Right ventricle myocardium inferior (tissue), 1 donor: ENCODE measurements at regions of chr12 and their contacts with region 1.

Region 1: DNA sequence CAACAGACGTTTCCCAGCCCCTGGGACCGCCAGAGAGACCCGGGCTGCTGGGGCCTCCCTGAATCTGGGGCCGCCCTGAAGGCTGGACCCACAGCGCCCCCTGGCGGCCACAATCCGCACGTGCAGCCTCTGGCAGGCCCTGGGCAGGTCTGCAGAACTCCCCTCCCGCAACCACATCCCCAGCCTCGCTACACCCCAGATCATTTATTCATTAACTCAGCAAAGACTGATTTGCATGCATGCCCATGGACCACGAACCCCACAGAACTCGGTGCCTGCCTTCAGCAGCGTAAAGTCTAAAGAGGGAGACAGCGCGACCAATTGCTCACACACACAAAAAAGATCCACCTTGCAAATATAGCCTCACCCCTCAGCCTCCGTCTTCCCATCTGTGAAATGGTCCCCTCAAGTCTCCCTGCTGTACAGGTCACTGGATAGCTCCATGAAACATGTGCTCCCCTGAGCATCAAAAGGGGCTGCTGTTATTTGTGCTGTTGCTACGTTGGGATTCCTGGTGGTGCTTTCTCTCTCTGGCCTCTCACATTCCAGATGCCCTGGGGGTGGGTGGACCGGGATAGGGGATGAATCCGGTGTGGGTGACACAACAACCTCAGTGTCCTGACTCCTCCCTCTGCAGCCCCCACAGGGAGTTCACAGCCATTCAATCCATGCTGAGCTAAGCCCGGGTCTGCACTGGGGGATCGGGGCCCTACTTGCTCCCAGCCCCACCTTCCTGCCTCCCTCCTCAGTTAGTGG is 96.4 kb downstream of the SCARB1 start:
- DNase-seq: peak; percentile 93
- ATAC-seq: peak; percentile 67

Region 2: DNA sequence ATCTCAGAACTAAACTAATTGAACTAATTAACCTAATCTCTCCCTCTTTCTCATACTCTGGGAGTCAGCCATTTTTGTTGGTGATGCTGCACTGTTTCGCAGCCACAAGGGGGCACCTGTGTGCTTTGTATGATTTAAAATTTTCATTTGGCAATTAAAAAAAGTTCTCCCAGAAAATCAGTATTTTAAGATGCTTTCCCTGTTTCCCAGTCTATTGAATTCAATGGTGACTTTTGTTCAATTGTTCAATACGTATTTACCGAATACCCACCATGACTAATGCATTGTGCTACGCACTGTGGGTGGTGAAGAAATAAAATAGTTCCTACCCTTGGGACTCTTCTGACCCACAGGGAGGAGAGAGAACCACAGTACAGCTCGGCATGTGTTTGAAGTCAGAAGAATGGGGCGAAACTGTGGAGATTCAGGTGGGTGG is 730.6 kb before region 1 on chr12:
- intact Hi-C with region 1: loop called (anchors 1 kb)
- DNase-seq: no peak
- ATAC-seq: no peak

Region 3: DNA sequence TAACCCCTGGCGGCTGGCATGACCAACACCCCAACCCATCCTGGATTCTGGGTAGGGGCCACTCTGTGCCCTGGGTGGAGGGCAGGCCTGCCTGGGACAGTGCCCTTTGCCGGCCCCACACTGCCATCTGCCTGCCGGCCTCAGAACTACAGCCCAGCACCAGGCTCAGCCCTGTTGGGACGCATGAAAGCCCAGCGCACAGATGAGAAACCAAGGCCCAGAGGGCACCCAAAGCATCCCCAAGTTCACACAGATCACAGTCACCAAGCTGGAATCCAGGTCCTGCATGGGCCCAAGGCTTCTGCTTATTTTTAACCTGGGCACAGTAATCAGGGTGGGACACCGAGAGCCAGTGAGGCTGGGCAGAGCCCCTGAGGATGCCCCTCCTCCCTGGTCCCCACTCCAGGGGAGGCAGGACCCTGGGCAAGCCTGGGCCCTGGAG is 446.2 kb before region 1 on chr12:
- intact Hi-C with region 1: loop called (anchors 1 kb)
- DNase-seq: no peak
- ATAC-seq: peak; percentile 73

Region 4: DNA sequence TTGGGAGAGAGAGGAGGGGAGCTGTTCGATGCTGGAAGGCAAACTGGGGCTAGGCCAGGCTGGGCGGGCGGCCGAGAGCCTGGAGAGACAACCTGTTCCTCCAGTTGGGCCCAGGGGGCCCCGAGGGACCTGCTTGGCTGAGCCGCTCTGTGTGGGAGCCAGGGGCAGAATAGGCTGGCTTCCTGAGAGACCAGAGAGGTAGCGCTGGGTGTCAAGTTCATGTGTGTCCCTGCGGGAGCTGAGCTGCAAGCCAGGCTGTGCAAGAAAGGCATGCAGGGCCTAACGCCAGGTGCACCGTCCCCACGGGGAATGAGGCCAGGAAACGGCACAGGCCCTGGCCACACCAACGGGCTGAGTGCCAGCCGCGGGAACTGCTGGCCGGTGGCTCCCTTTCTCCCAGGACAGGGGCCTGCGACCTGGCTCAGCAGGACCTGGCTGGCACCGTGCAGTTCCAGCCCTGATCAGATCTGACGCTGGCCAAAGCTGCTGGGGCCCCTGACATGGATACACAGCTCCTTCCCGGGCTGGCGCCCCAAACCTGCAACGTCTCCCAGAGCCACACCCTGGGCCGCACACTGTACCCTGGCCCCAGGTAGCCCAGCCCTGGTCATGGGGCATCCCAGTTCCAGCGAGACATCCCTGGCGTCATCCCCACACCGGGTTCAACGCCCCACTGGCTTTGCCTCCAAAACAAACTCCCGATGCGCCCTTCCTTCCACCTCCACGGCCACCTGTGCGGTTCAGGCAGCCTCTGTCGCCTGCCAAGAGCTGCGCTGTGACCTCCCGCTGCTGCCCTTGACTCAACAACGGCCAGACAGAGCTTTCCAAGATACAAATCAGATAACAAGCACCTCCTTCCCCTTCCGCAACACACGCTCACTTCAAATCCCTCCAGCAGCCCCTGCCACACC is 407.3 kb before region 1 on chr12:
- intact Hi-C with region 1: loop called (anchors 5 kb)
- DNase-seq: peak; percentile 95
- ATAC-seq: peak; percentile 93

Region 5: DNA sequence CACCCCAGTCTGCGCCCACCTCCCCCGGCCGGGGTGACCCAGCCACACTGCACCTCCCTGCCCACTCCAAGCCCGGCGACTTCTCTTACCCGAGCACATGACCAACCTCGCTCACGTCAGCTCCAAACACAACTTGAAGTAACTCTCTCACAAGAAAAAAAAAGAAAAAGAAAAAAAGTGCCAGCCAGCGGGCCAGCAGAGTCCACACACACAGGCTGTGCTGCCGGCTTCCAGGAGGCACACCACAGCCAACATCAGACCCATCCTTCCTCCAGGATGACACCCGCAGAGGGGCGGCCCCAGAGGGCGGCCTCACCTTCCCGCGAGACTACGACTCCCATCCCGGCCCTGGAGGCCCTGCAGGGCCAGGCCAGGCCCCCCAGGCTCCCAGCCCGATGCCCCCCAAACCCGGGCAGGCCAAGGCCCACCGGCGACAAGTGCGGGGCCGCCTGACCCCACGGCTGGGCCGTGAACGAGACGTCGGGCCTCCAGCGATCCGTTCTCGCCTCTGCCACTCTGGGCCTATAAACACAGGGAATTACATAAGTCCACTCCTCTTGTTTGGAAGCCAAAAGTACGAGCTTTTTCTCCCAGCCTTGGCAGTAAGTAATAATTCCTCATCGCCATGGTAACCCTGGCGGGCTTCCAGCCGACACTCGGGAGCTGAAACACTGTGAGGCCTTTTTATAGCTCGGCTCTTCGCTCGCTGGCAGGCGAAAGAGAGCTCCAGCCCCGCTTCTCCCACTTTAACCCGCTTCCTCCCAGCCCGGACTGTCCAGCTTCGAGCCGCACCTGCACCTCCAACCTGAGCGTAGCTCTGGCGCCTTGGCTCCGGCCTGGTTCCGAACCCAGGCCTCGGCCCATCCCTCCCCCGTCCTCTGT is 249.0 kb before region 1 on chr12:
- intact Hi-C with region 1: loop called (anchors 5 kb)
- DNase-seq: peak; percentile 97
- ATAC-seq: peak; percentile 76

Region 6: DNA sequence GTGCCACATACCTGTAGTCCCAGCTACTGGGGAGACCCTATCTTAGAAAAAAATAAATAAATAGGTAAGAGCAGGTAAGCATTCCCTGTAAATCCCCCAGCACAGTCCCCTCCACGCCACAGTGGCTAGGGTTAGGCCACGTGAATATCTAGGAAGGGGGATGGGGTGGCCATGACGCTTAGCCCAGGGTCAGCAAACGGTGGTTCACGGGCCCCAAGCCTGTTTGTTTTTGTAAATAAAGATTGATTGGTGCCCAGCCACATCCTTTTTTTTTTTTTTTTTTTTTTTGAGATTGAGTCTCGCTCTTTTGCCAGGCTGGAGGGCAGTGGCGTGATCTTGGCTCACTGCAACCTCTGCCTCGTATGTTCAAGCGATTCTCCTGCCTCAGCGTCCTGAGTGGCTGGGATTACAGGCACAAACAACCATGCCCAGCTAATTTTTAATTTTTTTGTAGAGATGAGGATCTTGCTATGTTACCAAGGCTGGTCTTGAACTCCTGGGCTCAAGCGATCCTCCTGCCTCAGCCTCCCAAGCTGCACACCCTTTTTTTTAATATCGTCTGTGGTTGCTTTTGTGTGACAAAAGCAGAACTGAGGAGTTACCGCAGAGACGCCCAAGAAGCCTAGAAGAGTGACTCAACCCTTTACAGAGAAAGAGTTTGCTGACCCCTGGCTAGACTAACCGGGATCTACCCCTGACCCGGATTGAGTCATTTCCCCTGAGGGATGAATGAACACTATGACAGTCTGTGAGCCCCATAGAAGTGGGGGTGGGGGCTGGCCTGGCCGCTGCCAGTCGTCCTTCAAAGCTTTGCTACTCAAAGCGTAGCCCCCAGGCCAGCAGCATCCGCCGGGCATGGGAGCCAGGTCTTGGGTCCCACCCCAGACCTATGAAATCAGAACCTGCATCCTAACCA is 86.1 kb before region 1 on chr12:
- intact Hi-C with region 1: loop called (anchors 5 kb)
- DNase-seq: peak; percentile 77
- ATAC-seq: peak; percentile 79

Region 7: GRCh38 chr12:124720004-124720680 is 47.1 kb before region 1 on chr12:
- intact Hi-C with region 1: no loop called
- DNase-seq: no peak
- ATAC-seq: peak; percentile 13